Esophagus squamous epithelium (tissue), 5 donors: ENCODE measurements at regions of chr2 and their contacts with region 1.

Region 1: GRCh38 chr2:204686406-204686805 is 141.1 kb downstream of the PARD3B start:
- DNase-seq: no peak
- H3K4me3 ChIP-seq: no peak overlapping the region
- H3K27ac ChIP-seq: no peak overlapping the region
- H3K4me1 ChIP-seq: peaks cover 0 to 11% (median 0%) of the 10 kb centered on the region in 3 donors
- H3K27me3 ChIP-seq: no peaks in the 10 kb centered on the region
- CTCF ChIP-seq: no peak
- POLR2A ChIP-seq: no peak

Region 2: DNA sequence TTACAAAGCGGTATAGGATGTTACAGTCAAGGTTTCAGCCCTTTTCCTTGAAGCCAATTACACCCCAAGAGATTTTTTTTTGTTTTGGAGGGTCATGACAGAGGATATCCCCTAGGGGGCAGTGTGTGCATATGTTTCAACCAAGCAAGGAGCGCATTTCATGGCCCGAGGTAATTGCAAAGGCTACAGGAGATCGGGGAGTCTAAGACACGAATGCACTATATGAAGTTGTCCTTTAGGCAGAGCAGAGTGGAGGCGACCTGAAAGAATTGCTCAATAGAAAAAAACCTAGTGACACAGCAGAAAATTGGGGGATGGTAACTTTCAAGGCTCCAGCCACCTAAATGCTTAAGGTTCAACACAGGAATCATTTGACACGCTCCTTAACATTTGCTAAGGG is 360.9 kb before region 1 on chr2:
- intact Hi-C with region 1: loop called (anchors 5 kb)
- DNase-seq: no peak
- H3K4me3 ChIP-seq: no peak overlapping the region
- H3K27ac ChIP-seq: no peak overlapping the region
- H3K4me1 ChIP-seq: peaks cover 5 to 10% (median 6%) of the 10 kb centered on the region in 3 donors
- H3K27me3 ChIP-seq: no peaks in the 10 kb centered on the region
- CTCF ChIP-seq: peak; percentile 47 to 92 (median 87)
- POLR2A ChIP-seq: no peak